Caki2 (cell line): ENCODE measurements at regions of chr2 and their contacts with region 1.

Region 1: GRCh38 chr2:101124643-101125366 is 26.4 kb downstream of the TBC1D8 start:
- DNase-seq: peak; percentile 99

Region 2: DNA sequence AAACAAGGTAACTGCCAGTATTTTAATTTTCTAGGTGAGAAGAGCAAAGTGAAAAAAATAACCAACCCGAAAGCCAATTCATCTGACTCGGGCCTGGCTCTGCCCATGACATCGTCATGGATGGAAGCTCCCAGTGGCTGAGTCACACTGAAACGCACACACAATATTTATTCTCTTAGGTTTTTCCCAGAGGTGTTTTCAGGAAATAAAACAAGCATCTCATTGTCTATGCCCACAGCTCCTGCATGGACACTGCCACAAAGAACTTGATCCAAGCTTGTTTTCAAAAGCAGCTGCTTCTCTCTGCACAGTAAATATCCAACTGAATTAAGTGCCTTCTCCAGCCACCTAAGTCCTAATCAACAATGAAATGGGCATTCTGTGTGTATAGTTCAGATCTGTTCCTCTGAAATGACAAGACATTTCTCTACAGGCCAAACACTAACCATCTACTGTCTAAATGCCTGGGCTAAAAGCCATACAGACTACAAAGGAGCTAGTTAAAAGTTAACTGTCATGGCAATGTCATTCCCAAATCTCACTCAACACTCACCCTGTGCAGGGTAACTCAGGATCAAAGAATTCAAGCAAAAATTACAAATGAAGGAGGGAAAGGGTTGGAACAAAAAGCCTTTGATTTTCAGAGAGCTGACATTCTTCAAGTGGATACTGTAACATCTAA is 59.8 kb before region 1 on chr2:
- in situ Hi-C with region 1: loop called (anchors 5 kb)
- DNase-seq: peak; percentile 94